Activated B cell treated with CpG ODN at 0.5 μM for 24 hours (primary cell): ENCODE measurements at regions of chr18 and their contacts with region 1.

Region 1: DNA sequence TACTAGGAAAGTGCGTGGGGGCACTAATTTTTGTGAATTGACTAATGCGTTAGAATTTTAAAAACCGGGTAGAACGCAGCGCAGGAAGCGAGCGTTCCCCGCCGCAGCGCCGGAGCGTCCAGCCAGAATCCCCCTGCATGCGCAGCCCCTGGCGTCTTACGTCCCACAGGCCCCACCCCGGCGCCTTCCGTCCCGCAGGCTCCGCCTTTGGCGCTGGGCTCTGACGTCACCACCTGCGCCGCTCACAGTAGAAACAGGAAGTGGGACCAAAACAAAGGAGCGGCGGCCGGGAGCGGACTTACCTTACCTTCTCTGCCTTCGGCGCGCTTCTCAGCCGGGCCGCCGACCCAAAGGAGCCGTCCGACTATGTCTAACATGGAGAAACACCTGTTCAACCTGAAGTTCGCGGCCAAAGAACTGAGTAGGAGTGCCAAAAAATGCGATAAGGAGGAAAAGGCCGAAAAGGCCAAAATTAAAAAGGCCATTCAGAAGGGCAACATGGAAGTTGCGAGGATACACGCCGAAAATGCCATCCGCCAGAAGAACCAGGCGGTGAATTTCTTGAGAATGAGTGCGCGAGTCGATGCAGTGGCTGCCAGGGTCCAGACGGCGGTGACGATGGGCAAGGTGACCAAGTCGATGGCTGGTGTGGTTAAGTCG is at the start of gene CHMP1B:
- DNase-seq: peak; percentile 98
- ATAC-seq: peak; percentile 94
- H3K4me3 Mint-ChIP-seq: peak within 1 kb of the TSS; percentile 100
- H3K27ac Mint-ChIP-seq: peak within 1 kb of the TSS; percentile 99
- H3K4me1 Mint-ChIP-seq: peaks cover 52% of the 10 kb centered on the region
- H3K27me3 Mint-ChIP-seq: no peaks in the 10 kb centered on the region
- CTCF ChIP-seq: no peak
- total RNA-seq, gene CHMP1B: 28.5 and 29.4 TPM in 2 replicates

Region 2: DNA sequence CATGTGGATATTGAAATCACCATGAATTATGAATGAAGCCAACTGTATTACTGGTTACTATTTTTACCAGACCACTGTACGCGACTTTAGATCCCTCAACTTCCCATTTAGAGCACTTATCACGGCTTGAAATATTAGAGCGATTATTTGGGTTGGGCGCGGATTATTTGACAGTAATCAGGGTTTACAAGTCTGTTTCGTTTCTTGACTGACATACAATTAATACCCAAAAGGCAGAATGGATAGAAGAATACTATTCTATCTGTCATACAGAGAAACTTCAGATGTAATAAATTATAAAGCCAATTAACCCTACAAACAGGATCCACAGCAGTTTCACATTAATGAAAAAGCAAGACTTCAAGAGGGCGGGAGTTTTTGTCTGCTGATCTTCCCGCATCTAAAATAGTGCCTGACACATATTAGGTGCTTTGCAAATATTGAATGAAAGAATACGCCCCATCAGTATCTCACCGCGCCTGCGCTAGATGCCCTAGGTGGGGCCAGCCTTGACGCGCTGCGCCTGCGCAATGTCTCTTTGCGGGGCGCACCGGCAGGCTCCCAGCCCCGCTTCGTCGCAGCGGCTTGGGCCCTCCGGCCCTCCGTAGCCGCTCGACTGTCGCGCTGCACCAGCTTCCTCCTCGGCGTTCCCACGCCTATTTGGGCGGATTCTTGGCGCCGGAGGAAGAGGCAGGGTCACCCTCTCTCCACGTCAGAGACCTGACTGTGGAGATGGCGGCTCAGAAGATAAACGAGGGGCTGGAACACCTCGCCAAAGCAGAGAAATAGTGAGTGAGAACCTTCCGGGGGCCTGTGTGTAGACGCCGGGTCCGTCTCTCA is 1325.7 kb before region 1 on chr18 and contains the start of gene NAPG:
- CTCF ChIA-PET with region 1: no interaction called
- POLR2A ChIA-PET with region 1: no interaction called
- intact Hi-C with region 1: loop called (anchors 5 kb)
- DNase-seq: peak; percentile 86
- ATAC-seq: peak; percentile 91
- H3K4me3 Mint-ChIP-seq: peak within 1 kb of the TSS; percentile 99
- H3K27ac Mint-ChIP-seq: peak within 1 kb of the TSS; percentile 96
- H3K4me1 Mint-ChIP-seq: peaks cover 49% of the 10 kb centered on the region
- H3K27me3 Mint-ChIP-seq: no peaks in the 10 kb centered on the region
- CTCF ChIP-seq: no peak
- total RNA-seq, gene NAPG: 24.5 and 33.3 TPM in 2 replicates

Region 3: GRCh38 chr18:10965119-10965518 is 886.2 kb before region 1 on chr18:
- CTCF ChIA-PET with region 1: no interaction called
- POLR2A ChIA-PET with region 1: no interaction called
- intact Hi-C with region 1: no loop called
- DNase-seq: no peak
- ATAC-seq: no peak
- H3K4me3 Mint-ChIP-seq: no peak overlapping the region
- H3K27ac Mint-ChIP-seq: no peak overlapping the region
- H3K4me1 Mint-ChIP-seq: no peaks in the 10 kb centered on the region
- H3K27me3 Mint-ChIP-seq: no peaks in the 10 kb centered on the region
- CTCF ChIP-seq: no peak

Region 4: DNA sequence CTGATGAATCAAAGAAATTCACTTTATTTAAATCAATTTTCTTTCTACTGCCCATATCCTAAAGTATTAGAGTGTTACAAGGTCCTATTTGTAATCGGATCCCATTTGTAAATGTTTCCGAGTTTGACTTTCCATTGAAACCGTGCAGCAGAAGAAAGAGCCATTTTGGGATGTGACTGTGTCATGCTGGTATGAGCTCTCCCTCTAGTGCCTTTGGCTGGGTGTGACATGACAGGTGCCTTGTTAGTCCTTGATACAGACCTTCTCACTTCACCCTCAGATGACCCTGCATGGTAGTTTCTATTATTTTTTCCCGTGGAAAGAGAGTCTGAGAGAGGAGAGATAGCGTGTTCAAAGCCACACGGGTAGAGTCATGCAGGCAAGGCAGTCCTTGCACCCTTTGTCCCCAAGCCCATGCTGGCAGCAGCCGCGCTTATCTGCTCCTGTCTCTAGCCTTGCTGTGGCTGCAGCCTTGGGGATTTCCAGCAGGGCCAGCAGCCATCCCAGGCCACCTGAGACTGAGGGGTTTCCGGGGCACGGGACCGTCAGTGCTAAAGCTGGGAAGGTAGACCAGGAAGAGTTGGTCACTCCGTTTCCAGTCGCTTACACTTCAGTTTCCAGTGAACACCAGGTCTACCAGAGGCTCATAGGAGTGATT is 21.3 kb after region 1 on chr18:
- CTCF ChIA-PET with region 1: no interaction called
- POLR2A ChIA-PET with region 1: no interaction called
- intact Hi-C with region 1: no loop called
- DNase-seq: no peak
- ATAC-seq: no peak
- H3K4me3 Mint-ChIP-seq: no peak overlapping the region
- H3K27ac Mint-ChIP-seq: no peak overlapping the region
- H3K4me1 Mint-ChIP-seq: peaks cover 9% of the 10 kb centered on the region
- H3K27me3 Mint-ChIP-seq: peaks cover 4% of the 10 kb centered on the region
- CTCF ChIP-seq: no peak

Region 5: GRCh38 chr18:11908182-11909060 is 57.1 kb after region 1 on chr18 and contains the start of gene MPPE1:
- CTCF ChIA-PET with region 1: no interaction called
- POLR2A ChIA-PET with region 1: interaction called, 11 read pairs
- intact Hi-C with region 1: loop called (anchors 1 kb)
- DNase-seq: peak; percentile 87
- ATAC-seq: peak; percentile 91
- H3K4me3 Mint-ChIP-seq: peak within 1 kb of the TSS; percentile 94
- H3K27ac Mint-ChIP-seq: peak within 1 kb of the TSS; percentile 94
- H3K4me1 Mint-ChIP-seq: peaks cover 25% of the 10 kb centered on the region
- H3K27me3 Mint-ChIP-seq: no peaks in the 10 kb centered on the region
- CTCF ChIP-seq: no peak
- total RNA-seq, gene MPPE1: 39.0 and 52.9 TPM in 2 replicates

Region 6: GRCh38 chr18:12049978-12050811 is 198.9 kb after region 1 on chr18:
- CTCF ChIA-PET with region 1: no interaction called
- POLR2A ChIA-PET with region 1: no interaction called
- intact Hi-C with region 1: loop called (anchors 2 kb)
- DNase-seq: peak; percentile 34
- ATAC-seq: peak; percentile 88
- H3K4me3 Mint-ChIP-seq: peak overlapping the region; percentile 70
- H3K27ac Mint-ChIP-seq: peak overlapping the region; percentile 79
- H3K4me1 Mint-ChIP-seq: peaks cover 55% of the 10 kb centered on the region
- H3K27me3 Mint-ChIP-seq: no peaks in the 10 kb centered on the region
- CTCF ChIP-seq: no peak

Region 7: GRCh38 chr18:12408247-12408869 is 557.1 kb after region 1 on chr18:
- CTCF ChIA-PET with region 1: no interaction called
- POLR2A ChIA-PET with region 1: no interaction called
- intact Hi-C with region 1: loop called (anchors 2 kb)
- DNase-seq: no peak
- ATAC-seq: peak; percentile 8
- H3K4me3 Mint-ChIP-seq: peak overlapping the region; percentile 76
- H3K27ac Mint-ChIP-seq: peak overlapping the region; percentile 68
- H3K4me1 Mint-ChIP-seq: peaks cover 18% of the 10 kb centered on the region
- H3K27me3 Mint-ChIP-seq: peaks cover 7% of the 10 kb centered on the region
- CTCF ChIP-seq: no peak

Region 8: GRCh38 chr18:13137670-13138419 is 1286.6 kb after region 1 on chr18:
- CTCF ChIA-PET with region 1: no interaction called
- POLR2A ChIA-PET with region 1: no interaction called
- intact Hi-C with region 1: loop called (anchors 2 kb)
- DNase-seq: peak; percentile 43
- ATAC-seq: peak; percentile 87
- H3K4me3 Mint-ChIP-seq: peak overlapping the region; percentile 98
- H3K27ac Mint-ChIP-seq: peak overlapping the region; percentile 97
- H3K4me1 Mint-ChIP-seq: peaks cover 23% of the 10 kb centered on the region
- H3K27me3 Mint-ChIP-seq: no peaks in the 10 kb centered on the region
- CTCF ChIP-seq: no peak